ENCODE measurements at regions of chr6 and their contacts with region 1.

Region 1: DNA sequence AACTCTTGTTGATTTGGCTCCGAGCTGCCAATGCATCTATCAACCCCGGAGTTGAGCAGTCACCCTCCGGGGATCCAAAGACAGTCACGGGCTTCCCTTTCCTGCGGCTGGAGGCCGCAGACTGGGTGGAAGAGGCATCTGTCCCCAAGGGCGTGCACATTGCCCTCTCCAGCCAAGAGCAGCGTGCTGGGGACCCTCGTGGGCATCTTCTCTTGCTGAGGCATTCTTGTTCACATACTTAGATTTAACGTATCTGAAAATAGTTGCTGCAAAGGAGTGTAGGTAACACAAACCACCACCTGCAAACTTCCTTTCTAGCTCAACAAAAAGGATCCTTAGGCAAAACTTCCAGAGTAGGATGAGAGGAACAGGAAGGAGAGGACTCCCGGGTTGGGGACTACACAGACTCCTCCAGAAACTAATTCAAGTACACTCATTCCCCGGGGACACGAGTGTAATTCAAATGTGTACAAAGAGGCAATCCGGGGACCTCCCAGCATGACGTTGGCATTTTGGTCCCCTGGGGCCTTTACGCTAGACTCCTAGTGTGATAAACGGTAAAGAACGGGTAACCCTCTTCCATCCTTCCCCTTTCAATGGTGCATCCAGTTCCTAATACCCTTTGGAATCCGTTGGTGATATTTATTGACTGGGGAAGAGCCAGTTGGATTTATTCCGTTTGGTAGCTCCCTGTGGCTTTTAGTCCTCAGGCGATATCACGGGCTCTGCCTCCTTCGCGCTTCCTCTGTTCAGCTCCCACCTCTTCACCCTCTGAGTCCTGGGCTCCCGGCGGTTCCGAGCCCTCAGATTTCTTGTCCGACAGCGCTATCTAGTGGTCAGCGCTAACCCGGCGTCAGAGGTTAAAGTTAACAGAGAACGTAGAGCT is 2.7 kb upstream of the COL12A1 start:
- DNase-seq: peak; percentile 73 to 83
- H3K4me3 ChIP-seq: no peak overlapping the region
- H3K4me3 Mint-ChIP-seq: peak overlapping the region; percentile 12
- H3K27ac Mint-ChIP-seq: no peak overlapping the region
- H3K4me1 ChIP-seq: peaks cover 13% of the 10 kb centered on the region
- H3K4me1 Mint-ChIP-seq: peaks cover 14% of the 10 kb centered on the region
- H3K27me3 ChIP-seq: no peaks in the 10 kb centered on the region
- H3K27me3 Mint-ChIP-seq: no peaks in the 10 kb centered on the region
- CTCF ChIP-seq: peak; percentile 79 to 81

Region 2: DNA sequence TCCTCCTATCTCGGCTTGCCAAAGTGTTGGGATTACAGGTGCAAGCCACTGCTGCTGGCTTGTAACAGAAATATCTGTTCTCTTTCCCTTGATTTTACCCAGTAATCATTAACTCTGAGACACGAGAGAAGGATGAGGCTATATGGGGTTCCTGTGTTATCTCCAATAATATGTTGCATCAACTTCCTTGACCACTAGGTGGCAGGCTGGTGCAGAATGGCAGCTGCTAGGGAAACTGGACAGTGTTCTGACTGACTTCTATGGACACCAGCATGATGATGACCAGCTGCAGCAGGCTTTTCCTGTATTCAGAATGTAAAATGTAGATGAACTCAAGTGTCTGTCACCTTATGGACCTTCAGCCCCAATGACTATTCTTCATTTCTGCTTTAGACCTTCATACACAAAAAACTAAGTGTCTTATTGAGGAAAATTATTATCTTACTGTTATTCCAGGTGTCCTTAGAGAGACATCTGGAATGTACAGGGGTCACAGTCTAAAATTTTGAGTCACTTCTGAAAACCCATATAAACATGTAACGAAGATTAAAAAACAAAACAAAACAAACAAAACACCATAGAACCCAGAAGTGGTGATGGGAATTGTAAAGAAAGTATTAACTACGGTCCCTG is 1533.0 kb before region 1 on chr6:
- CTCF ChIA-PET with region 1: no interaction called
- POLR2A ChIA-PET with region 1: no interaction called
- intact Hi-C with region 1: loop called (anchors 5 kb)
- DNase-seq: peak; percentile 81 to 89
- H3K4me3 ChIP-seq: no peak overlapping the region
- H3K4me3 Mint-ChIP-seq: no peak overlapping the region
- H3K27ac Mint-ChIP-seq: no peak overlapping the region
- H3K4me1 ChIP-seq: no peaks in the 10 kb centered on the region
- H3K4me1 Mint-ChIP-seq: no peaks in the 10 kb centered on the region
- H3K27me3 ChIP-seq: no peaks in the 10 kb centered on the region
- H3K27me3 Mint-ChIP-seq: no peaks in the 10 kb centered on the region
- CTCF ChIP-seq: peak; percentile 86 to 90

Region 3: GRCh38 chr6:73969971-73970970 is 1238.3 kb before region 1 on chr6:
- CTCF ChIA-PET with region 1: no interaction called
- POLR2A ChIA-PET with region 1: no interaction called
- intact Hi-C with region 1: loop called (anchors 1 kb)
- DNase-seq: peak in 1 of 2 experiments; percentile 48
- H3K4me3 ChIP-seq: no peak overlapping the region
- H3K4me3 Mint-ChIP-seq: no peak overlapping the region
- H3K27ac Mint-ChIP-seq: no peak overlapping the region
- H3K4me1 ChIP-seq: no peaks in the 10 kb centered on the region
- H3K4me1 Mint-ChIP-seq: no peaks in the 10 kb centered on the region
- H3K27me3 ChIP-seq: no peaks in the 10 kb centered on the region
- H3K27me3 Mint-ChIP-seq: peaks cover 3% of the 10 kb centered on the region
- CTCF ChIP-seq: peak; percentile 51 to 64

Region 4: GRCh38 chr6:74409447-74409846 is 799.1 kb before region 1 on chr6:
- CTCF ChIA-PET with region 1: interaction called, 11 read pairs
- POLR2A ChIA-PET with region 1: no interaction called
- intact Hi-C with region 1: loop called (anchors 1 kb)
- DNase-seq: peak in 1 of 2 experiments; percentile 24
- H3K4me3 ChIP-seq: no peak overlapping the region
- H3K4me3 Mint-ChIP-seq: no peak overlapping the region
- H3K27ac Mint-ChIP-seq: no peak overlapping the region
- H3K4me1 ChIP-seq: peaks cover 16% of the 10 kb centered on the region
- H3K4me1 Mint-ChIP-seq: peaks cover 9% of the 10 kb centered on the region
- H3K27me3 ChIP-seq: no peaks in the 10 kb centered on the region
- H3K27me3 Mint-ChIP-seq: no peaks in the 10 kb centered on the region
- CTCF ChIP-seq: peak; percentile 42 to 46

Region 5: DNA sequence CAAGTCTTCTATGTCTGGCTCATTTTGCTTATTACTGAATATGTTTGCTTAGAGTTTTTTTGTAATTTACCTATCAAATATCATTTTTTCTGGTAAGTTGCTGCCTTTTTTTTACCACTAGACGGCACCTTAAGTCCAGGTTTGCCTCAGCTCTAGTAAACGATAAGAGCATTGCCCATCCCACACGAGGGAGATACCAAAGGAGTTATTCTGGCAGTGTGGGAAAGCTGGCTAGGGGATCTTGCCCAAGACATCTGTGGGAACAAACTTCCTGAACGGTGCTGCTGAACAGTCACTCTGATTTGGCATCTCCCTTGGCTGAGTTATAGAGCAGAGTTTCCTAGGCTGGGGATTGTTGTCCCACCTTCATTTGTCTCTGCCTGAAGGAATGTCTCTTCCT is 309.1 kb before region 1 on chr6:
- CTCF ChIA-PET with region 1: interaction called, 9 read pairs
- POLR2A ChIA-PET with region 1: no interaction called
- intact Hi-C with region 1: loop called (anchors 1 kb)
- DNase-seq: peak in 1 of 2 experiments; percentile 13
- H3K4me3 ChIP-seq: no peak overlapping the region
- H3K4me3 Mint-ChIP-seq: no peak overlapping the region
- H3K27ac Mint-ChIP-seq: no peak overlapping the region
- H3K4me1 ChIP-seq: no peaks in the 10 kb centered on the region
- H3K4me1 Mint-ChIP-seq: no peaks in the 10 kb centered on the region
- H3K27me3 ChIP-seq: no peaks in the 10 kb centered on the region
- H3K27me3 Mint-ChIP-seq: peaks cover 4% of the 10 kb centered on the region
- CTCF ChIP-seq: no peak

Region 6: GRCh38 chr6:75101896-75102295 is 106.6 kb before region 1 on chr6:
- CTCF ChIA-PET with region 1: interaction called, 6 read pairs
- POLR2A ChIA-PET with region 1: no interaction called
- intact Hi-C with region 1: loop called (anchors 1 kb)
- DNase-seq: no peak
- H3K4me3 ChIP-seq: no peak overlapping the region
- H3K4me3 Mint-ChIP-seq: no peak overlapping the region
- H3K27ac Mint-ChIP-seq: no peak overlapping the region
- H3K4me1 ChIP-seq: peaks cover 24% of the 10 kb centered on the region
- H3K4me1 Mint-ChIP-seq: peaks cover 31% of the 10 kb centered on the region
- H3K27me3 ChIP-seq: no peaks in the 10 kb centered on the region
- H3K27me3 Mint-ChIP-seq: no peaks in the 10 kb centered on the region
- CTCF ChIP-seq: no peak

Region 7: DNA sequence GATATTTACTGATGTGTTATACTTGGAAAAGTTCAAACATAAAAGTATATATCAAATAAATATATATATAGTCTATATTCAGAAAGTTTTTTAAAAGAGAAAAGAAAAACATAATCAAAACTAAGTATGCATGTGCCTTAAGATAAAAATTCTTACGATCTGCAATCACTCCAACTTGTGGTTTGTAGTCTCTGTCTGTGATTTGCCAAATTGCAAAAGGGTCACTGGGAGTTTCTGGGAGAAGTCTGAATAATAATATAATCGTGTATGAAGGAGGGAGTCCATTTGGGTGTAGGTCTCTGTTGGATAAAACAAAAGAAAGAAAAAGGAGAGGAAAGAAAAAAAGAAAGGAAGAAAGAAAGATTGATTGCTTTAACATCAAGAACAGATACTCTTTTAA is 95.1 kb before region 1 on chr6:
- CTCF ChIA-PET with region 1: no interaction called
- POLR2A ChIA-PET with region 1: no interaction called
- intact Hi-C with region 1: no loop called
- DNase-seq: no peak
- H3K4me3 ChIP-seq: no peak overlapping the region
- H3K4me3 Mint-ChIP-seq: no peak overlapping the region
- H3K27ac Mint-ChIP-seq: no peak overlapping the region
- H3K4me1 ChIP-seq: peaks cover 12% of the 10 kb centered on the region
- H3K4me1 Mint-ChIP-seq: peaks cover 24% of the 10 kb centered on the region
- H3K27me3 ChIP-seq: no peaks in the 10 kb centered on the region
- H3K27me3 Mint-ChIP-seq: no peaks in the 10 kb centered on the region
- CTCF ChIP-seq: no peak

Region 8: DNA sequence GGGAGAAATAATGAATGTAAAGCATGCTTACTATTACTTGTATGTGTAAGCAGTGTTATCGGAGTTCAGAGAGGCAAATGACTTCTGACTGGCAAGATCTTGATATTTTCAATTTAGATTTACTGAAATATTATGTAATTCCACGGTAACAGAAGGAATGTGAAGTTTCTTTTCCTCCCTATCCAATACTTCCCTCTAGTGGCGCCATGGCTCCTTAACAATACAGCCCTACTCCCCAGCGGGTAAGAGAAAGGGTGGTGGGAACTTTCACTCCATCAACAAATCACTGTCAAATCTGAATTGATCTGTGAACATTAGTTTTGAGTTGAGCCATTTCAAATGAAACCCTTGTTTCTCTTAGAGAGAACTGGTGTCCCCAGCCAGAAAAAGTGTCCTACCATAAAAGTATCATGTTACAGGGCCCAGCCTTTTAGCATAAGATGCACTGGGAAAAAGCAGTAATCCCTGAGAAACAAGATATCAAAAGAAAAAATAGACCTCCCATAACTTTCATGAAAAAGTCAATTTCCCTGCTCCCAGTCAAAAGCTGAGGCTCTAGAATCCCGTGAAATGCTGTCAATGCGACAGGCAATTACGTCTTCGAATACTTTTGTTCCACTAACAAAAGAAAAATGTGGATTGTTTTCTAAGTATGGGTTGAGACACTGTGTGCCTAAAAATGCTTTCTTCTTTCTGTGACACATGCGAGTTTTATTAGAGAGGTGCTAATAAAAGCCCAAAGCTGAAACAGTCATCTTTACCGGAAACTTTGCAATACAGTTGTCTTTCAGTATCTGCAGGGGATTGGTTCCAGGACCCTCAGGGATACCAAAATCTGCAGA is 22.2 kb after region 1 on chr6:
- CTCF ChIA-PET with region 1: interaction called, 6 read pairs
- POLR2A ChIA-PET with region 1: no interaction called
- intact Hi-C with region 1: loop called (anchors 1 kb)
- DNase-seq: peak in 1 of 2 experiments; percentile 48
- H3K4me3 ChIP-seq: no peak overlapping the region
- H3K4me3 Mint-ChIP-seq: no peak overlapping the region
- H3K27ac Mint-ChIP-seq: no peak overlapping the region
- H3K4me1 ChIP-seq: no peaks in the 10 kb centered on the region
- H3K4me1 Mint-ChIP-seq: no peaks in the 10 kb centered on the region
- H3K27me3 ChIP-seq: no peaks in the 10 kb centered on the region
- H3K27me3 Mint-ChIP-seq: no peaks in the 10 kb centered on the region
- CTCF ChIP-seq: peak; percentile 61 to 75